ENCODE measurements at regions of chr5 and their contacts with region 1.

Region 1: GRCh38 chr5:147963948-147964693 is 57.8 kb upstream of the C5orf46 start:
- DNase-seq: peak; percentile 21
- H3K4me3 Mint-ChIP-seq: no peak overlapping the region
- H3K27ac Mint-ChIP-seq: peak overlapping the region; percentile 6
- H3K4me1 Mint-ChIP-seq: peaks cover 30% of the 10 kb centered on the region
- H3K27me3 Mint-ChIP-seq: no peaks in the 10 kb centered on the region
- CTCF ChIP-seq: no peak

Region 2: GRCh38 chr5:147849226-147849625 is 114.9 kb before region 1 on chr5:
- CTCF ChIA-PET with region 1: no interaction called
- intact Hi-C with region 1: no loop called
- DNase-seq: no peak
- H3K4me3 Mint-ChIP-seq: no peak overlapping the region
- H3K27ac Mint-ChIP-seq: no peak overlapping the region
- H3K4me1 Mint-ChIP-seq: peaks cover 31% of the 10 kb centered on the region
- H3K27me3 Mint-ChIP-seq: no peaks in the 10 kb centered on the region
- CTCF ChIP-seq: no peak

Region 3: DNA sequence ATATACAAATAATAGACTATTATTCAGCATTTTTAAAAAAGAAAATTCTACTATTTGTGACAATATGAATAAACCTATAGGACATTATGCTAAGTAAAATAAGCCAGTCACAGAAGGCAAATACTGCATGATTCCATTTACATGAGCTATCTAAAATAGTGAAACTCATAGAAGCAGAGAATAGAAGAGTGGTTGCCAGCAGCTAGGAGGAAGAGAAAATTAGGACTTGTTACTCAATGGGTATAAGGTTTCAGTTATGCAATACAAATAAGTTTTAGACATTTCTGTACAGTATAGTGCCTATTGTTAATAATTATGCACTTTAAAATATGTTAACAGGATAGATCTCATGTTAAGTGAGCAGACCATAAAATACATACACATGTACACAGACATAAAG is 25.9 kb after region 1 on chr5:
- CTCF ChIA-PET with region 1: no interaction called
- intact Hi-C with region 1: no loop called
- DNase-seq: no peak
- H3K4me3 Mint-ChIP-seq: no peak overlapping the region
- H3K27ac Mint-ChIP-seq: no peak overlapping the region
- H3K4me1 Mint-ChIP-seq: peaks cover 23% of the 10 kb centered on the region
- H3K27me3 Mint-ChIP-seq: no peaks in the 10 kb centered on the region
- CTCF ChIP-seq: no peak

Region 4: DNA sequence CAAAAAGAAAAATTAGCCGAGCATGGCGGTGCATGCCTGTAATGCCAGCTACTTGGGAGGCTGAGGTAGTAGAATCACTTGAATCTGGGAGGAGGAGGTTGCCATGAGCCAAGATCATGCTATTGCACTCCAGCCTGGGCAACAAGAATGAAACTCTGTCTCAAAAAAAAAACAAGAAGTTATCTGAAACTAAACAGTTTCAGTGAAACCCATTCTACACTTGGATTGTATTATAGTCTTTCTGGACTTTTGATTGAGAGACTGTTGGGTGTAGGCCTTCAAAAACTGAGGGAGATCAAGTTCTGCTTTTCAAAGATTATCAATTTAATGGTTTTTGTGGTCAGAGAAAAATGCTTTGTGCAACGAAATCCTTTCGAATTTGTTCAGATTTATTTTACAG is 65.0 kb after region 1 on chr5:
- CTCF ChIA-PET with region 1: no interaction called
- intact Hi-C with region 1: loop called (anchors 5 kb)
- DNase-seq: no peak
- H3K4me3 Mint-ChIP-seq: no peak overlapping the region
- H3K27ac Mint-ChIP-seq: no peak overlapping the region
- H3K4me1 Mint-ChIP-seq: no peaks in the 10 kb centered on the region
- H3K27me3 Mint-ChIP-seq: no peaks in the 10 kb centered on the region
- CTCF ChIP-seq: no peak

Measured in Calu3 (cell line).